Common myeloid progenitor, CD34-positive (primary cell): ENCODE measurements at regions of chr1 and their contacts with region 1.

Region 1: GRCh38 chr1:35298464-35298863 is 30.0 kb downstream of the ZMYM4 start:
- DNase-seq: peak; percentile 72 to 86 (median 84)
- H3K4me3 ChIP-seq: no peak overlapping the region
- H3K27ac ChIP-seq: no peak overlapping the region
- H3K4me1 ChIP-seq: peaks cover 0 to 5% (median 1%) of the 10 kb centered on the region in 4 experiments
- H3K27me3 ChIP-seq: no peaks in the 10 kb centered on the region

Region 2: DNA sequence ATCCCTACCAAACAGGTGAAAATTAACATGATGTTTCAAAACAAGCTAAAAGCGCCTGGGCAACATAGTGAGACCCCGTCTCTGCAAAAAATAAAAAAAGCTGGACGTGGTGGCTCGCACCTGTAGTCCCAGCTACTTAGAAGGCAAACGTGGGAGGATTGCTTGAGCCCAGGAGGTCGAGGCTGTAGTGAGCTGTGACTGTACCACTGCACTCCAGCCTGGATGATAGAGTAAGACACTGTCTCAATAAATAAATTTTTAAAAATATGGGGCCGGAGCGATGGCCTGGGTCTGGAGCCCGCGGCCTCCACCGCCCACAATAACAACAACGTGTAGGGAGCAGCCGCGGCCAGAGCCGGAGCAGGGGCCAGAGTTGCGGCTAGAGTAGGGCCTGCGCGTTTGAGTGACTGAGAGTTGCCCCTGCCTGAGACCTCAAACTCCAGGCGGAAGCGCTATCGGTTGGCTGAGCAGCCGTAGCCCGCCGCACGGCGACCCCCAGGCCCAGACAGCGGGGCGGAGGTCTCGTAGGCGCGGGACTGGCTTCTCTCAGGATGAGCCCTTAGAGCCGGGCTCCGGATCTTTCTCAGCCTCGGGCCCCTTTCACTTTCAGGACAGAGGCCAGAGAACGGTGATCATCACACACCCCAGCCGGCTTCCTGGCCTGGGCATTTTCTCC is 177.9 kb before region 1 on chr1:
- CTCF ChIA-PET with region 1: no interaction called
- POLR2A ChIA-PET with region 1: no interaction called
- DNase-seq: peak in 2 of 3 donors; percentile 37 to 53
- H3K4me3 ChIP-seq: peak overlapping the region; percentile 24 to 78 (median 42)
- H3K27ac ChIP-seq: no peak overlapping the region
- H3K4me1 ChIP-seq: peaks cover 0 to 6% (median 2%) of the 10 kb centered on the region in 4 experiments
- H3K27me3 ChIP-seq: no peaks in the 10 kb centered on the region

Region 3: DNA sequence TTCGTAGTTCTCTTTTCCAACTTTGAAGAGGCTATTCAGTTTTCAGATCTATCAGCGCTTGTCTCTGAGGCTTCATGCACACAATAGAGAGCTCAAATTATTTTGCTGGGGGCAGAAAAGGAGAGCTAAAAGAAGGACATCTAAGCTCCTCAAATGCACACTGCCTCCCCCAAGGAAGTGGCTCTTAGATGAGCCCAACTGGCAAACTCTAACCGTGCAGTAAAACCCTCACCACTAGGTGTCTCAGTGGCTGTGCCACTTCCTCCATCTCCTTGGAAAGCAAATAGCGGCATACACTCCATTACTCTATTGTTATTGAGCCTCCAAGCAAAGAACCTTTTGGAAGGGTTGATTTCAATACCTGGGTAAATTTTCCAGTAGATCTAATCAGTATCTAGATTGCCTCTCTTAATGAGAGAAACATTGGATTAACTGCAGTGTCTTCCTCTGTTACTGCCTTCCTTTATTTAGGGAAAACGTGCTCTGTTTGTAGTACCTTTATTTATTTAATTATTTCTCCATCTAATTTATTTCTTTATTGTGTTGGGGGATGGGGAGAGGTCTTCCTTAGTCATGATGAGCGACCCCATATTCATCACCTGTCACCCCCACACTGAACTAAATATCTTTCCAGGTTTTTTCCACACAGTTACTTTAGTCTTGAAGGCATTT is 96.3 kb before region 1 on chr1:
- CTCF ChIA-PET with region 1: interaction called, 44 read pairs
- POLR2A ChIA-PET with region 1: no interaction called
- DNase-seq: peak; percentile 86 to 94 (median 92)
- H3K4me3 ChIP-seq: peak overlapping the region in 2 of 7 experiments; percentile 11 to 40
- H3K27ac ChIP-seq: no peak overlapping the region
- H3K4me1 ChIP-seq: peaks cover 0 to 4% (median 2%) of the 10 kb centered on the region in 4 experiments
- H3K27me3 ChIP-seq: no peaks in the 10 kb centered on the region